Activated CD4-positive, alpha-beta T cell treated with anti-CD3 and anti-CD28 coated beads, Interleukin-2, amount 10 ng/mL, durations not matched to agents 24 days and 14 days (primary cell): ENCODE measurements at regions of chr17 and their contacts with region 1.

Region 1: GRCh38 chr17:18363101-18364049 is at the start of gene SHMT1:
- DNase-seq: peak; percentile 98
- H3K4me3 Mint-ChIP-seq: peak within 1 kb of the TSS; percentile 93
- H3K27ac Mint-ChIP-seq: peak within 1 kb of the TSS; percentile 91
- H3K4me1 Mint-ChIP-seq: peaks cover 15% of the 10 kb centered on the region
- H3K27me3 Mint-ChIP-seq: no peaks in the 10 kb centered on the region
- total RNA-seq, gene SHMT1: 58.3 and 62.1 TPM in 2 replicates

Region 2: GRCh38 chr17:18260332-18261144 is 102.8 kb before region 1 on chr17 and contains the start of gene MIEF2:
- intact Hi-C with region 1: loop called (anchors 5 kb)
- DNase-seq: peak; percentile 98
- H3K4me3 Mint-ChIP-seq: peak within 1 kb of the TSS; percentile 85
- H3K27ac Mint-ChIP-seq: peak within 1 kb of the TSS; percentile 86
- H3K4me1 Mint-ChIP-seq: peaks cover 29% of the 10 kb centered on the region
- H3K27me3 Mint-ChIP-seq: no peaks in the 10 kb centered on the region
- total RNA-seq, gene MIEF2: 4.3 and 6.0 TPM in 2 replicates

Region 3: DNA sequence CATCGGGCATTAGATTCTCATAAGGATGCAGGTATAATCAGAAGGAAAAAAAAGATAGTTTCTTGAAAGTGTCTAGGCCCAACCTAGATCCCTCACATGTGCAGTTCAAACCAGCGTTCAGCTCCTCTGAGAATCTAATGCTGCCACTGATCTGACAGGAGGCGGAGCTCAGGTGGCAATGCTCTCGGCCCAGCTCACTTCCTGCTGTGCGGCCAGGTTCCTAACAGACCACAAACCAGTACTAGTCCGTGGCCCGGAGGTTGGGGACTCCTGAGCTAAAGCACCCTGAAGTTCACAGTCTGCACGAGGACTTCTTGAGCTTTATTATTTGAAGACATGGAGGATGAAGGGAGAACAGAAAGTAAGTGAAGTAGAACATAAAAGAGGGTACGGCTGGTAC is 31.5 kb before region 1 on chr17:
- intact Hi-C with region 1: no loop called
- DNase-seq: peak; percentile 73
- H3K4me3 Mint-ChIP-seq: peak overlapping the region; percentile 8
- H3K27ac Mint-ChIP-seq: peak overlapping the region; percentile 79
- H3K4me1 Mint-ChIP-seq: peaks cover 7% of the 10 kb centered on the region
- H3K27me3 Mint-ChIP-seq: no peaks in the 10 kb centered on the region